RWPE1 (cell line): ENCODE measurements at regions of chr2 and their contacts with region 1.

Region 1: GRCh38 chr2:55252832-55253231 is 16.2 kb downstream of the MTIF2 start:
- DNase-seq: no peak
- H3K27ac ChIP-seq: no peak overlapping the region
- CTCF ChIP-seq: no peak

Region 2: DNA sequence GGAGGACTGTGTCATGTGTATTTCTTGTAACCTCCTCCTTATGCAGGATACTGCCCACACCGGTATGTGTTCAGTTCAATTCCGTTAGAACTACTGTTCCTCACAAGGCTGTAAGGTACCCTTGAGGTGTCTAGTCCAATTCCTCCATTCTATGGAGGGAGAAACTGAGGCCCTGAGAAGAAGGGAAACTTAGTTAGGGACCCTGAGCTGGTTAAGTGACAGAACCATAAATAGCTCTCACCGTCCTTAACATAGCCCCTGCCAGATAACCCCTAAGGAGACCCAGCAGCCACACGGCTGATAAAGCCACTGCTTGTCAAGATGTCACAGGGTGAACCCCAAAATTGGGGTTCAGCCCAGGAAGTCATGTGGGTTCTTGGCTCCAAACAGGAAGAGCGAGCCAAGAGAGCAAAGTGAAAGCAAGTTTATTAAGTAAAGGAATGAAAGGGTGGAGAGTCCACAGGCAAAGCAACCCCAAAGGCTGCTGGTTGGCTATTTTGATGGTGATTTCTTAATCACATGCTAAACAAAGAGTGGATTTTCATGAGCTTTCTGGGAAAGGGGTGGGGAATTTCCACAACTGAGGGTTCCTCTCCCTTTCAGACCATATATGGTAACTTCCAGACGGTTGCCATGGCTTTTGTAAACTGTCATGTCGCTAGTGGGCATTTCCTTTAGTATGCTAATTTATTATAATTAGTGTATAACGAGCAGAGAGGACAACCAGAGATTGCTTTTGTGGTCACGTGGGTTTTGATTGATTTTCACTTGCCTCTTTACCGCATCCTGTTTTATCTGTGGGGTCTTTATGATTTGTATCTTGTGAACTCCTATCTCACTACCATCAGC is 119.1 kb before region 1 on chr2:
- CTCF ChIA-PET with region 1: no interaction called
- POLR2A ChIA-PET with region 1: no interaction called
- DNase-seq: no peak
- H3K27ac ChIP-seq: no peak overlapping the region
- CTCF ChIP-seq: no peak

Region 3: DNA sequence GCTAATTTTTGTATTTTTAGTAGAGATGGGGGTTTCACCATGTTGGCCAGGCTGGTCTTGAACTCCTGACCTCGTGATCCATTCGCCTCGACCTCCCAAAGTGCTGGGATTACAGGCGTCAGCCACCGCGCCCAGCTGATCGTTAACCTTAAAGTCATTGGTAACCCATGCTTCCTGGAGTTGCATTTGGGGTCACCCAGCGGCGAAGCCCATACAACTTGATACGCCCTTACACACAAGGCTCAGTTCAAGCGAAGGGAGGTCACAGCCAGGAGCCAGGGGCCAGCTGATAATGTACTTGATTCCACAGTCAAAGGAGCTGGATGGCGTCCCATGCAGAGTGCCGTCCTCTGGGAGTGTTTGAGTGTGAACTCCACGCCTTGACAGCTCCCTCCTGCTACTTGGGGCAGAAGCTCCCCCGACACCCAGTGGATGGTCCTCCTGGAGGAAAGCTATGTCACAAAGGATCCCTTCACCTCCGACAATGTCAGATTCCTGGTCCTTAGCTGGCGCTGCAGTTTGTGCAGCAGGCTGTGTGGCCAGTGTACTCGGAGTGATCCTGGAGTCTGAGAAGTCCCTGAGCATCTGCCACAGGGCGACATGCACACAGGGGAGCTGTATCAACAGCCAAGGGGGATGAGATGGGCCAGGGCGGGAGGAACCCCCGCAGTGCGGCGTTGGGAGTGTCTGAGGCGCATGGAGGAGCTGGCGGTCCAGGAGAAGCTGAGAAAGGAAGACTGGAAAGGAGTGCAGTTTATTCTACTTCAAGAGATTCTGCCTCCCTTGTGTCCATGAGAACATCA is 28.7 kb before region 1 on chr2:
- CTCF ChIA-PET with region 1: no interaction called
- POLR2A ChIA-PET with region 1: interaction called, 10 read pairs
- DNase-seq: no peak
- H3K27ac ChIP-seq: peak overlapping the region; percentile 69
- CTCF ChIP-seq: no peak